ENCODE measurements at regions of chr2 and their contacts with region 1.

Region 1: DNA sequence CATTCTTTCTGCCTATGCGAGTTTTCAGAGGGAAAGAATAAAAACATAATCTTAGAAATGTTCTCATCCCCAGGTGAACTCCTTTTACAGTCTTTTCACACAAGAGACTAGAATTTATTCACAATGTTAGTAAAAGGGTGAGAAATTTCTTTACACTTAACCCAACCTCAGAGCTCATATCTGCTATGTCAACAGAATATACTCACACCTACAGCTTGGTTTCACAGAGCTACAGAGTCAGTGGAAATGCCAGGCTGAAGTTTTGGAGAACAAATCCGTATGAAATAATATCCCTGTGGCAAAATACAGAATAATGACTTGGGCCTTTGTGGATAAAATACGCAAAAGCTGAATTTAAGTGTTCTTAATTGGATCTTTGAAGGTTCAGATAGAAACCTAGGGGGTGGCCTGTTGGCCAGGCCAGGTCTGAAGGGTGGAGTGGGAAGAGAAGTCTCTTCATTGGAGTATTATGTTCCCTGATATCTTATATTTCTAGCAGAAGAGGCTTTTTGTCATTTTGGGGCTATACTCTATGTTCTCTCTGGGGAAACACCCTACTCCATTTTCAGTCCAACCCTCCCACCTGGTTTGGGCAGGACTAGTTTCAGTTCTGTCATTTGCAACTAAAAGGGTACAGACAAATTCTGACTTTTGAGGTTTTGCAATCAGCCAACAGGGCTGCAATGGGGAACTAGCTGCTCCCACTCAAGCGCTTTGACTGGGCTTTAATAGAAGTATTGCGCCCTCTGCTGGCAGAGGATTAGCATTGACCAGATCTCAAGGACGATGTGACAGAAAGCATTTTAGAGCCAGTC is 25.7 kb downstream of the FBXO48 start:
- ATAC-seq: peak; percentile 73 to 95 (median 87)
- H3K4me3 ChIP-seq: no peak overlapping the region
- H3K27ac ChIP-seq: no peak overlapping the region
- H3K4me1 ChIP-seq: peaks cover 0 to 4% of the 10 kb centered on the region in 2 donors

Region 2: GRCh38 chr2:68018727-68019126 is 422.7 kb before region 1 on chr2:
- in situ Hi-C with region 1: no loop called
- ATAC-seq: no peak
- H3K4me3 ChIP-seq: no peak overlapping the region
- H3K27ac ChIP-seq: no peak overlapping the region
- H3K4me1 ChIP-seq: no peaks in the 10 kb centered on the region

Region 3: GRCh38 chr2:68121873-68122679 is 319.3 kb before region 1 on chr2:
- in situ Hi-C with region 1: loop called in 5 of 9 experiments (anchors 10 to 25 kb)
- ATAC-seq: peak; percentile 63 to 84 (median 72)
- H3K4me3 ChIP-seq: no peak overlapping the region
- H3K27ac ChIP-seq: no peak overlapping the region
- H3K4me1 ChIP-seq: no peaks in the 10 kb centered on the region

Region 4: DNA sequence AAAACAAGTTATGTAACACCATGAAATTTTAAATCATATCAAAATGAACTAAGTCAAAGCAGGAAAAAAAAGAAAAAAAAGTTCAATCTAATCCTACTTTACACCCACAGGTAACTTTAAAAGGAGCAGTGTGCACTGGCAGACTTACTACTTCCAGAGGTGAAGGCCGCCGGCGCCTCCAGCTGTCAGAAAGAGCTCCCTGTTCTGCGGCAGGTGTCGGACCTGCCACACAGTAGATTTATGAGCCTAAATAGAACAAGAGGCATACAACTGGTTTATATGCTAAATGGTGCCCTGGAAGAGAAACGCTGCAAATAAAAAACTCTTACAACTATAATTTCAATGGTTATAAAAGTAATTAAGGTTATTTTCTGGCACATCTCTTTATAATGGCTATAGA is 306.8 kb before region 1 on chr2:
- in situ Hi-C with region 1: loop called in 3 of 9 experiments (anchors 10 kb)
- ATAC-seq: no peak
- H3K4me3 ChIP-seq: no peak overlapping the region
- H3K27ac ChIP-seq: no peak overlapping the region
- H3K4me1 ChIP-seq: no peaks in the 10 kb centered on the region

Region 5: GRCh38 chr2:68282811-68283418 is 158.5 kb before region 1 on chr2:
- in situ Hi-C with region 1: loop called in 1 of 9 experiments (anchors 25 kb)
- ATAC-seq: peak in 1 of 8 experiments; percentile 27
- H3K4me3 ChIP-seq: no peak overlapping the region
- H3K27ac ChIP-seq: no peak overlapping the region
- H3K4me1 ChIP-seq: peaks cover 0 to 2% of the 10 kb centered on the region in 2 donors

Region 6: GRCh38 chr2:68319398-68320117 is 121.8 kb before region 1 on chr2 and contains the start of gene CNRIP1:
- in situ Hi-C with region 1: loop called in 1 of 9 experiments (anchors 25 kb)
- ATAC-seq: peak; percentile 64 to 82 (median 78)
- H3K4me3 ChIP-seq: peak within 1 kb of the TSS; percentile 52 to 74 (median 71)
- H3K27ac ChIP-seq: peak within 1 kb of the TSS; percentile 90 to 91
- H3K4me1 ChIP-seq: peaks cover 0 to 9% of the 10 kb centered on the region in 2 donors
- total RNA-seq, gene CNRIP1: 16.9 to 59.1 (median 40.2) TPM

Region 7: DNA sequence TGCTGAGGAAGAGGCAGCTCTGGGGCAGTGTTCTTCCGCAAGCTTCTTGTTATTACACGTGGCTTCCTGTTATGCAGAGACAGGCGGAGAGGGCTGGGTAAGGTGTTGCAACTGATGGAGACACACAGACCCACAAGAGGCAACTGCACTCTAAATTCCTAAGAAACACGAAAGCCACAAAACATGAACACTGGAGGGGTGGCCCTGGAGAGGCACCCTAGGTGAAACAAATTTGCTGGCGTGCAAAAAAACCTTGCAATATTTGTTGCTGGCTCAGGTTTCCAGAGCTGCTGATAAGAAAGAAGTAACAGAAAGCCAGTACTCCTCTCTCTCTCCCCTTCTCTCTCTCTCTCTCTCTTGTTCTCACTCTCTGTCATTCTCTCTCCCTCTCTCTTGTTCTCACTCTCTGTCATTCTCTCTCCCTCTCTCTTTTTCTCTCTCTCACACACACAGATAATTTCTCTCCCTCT is 325.0 kb after region 1 on chr2:
- in situ Hi-C with region 1: no loop called
- ATAC-seq: no peak
- H3K4me3 ChIP-seq: no peak overlapping the region
- H3K27ac ChIP-seq: no peak overlapping the region
- H3K4me1 ChIP-seq: no peaks in the 10 kb centered on the region

Measured in motor neuron (in vitro differentiated cells).